Heart left ventricle (tissue), 16 donors: ENCODE measurements at regions of chr12 and their contacts with region 1.

Region 1: GRCh38 chr12:46661110-46661845 is 164.5 kb downstream of the SLC38A4 start:
- DNase-seq: peak in 2 of 5 donors; percentile 24 to 29
- ATAC-seq: peak; percentile 57 to 83 (median 82)
- H3K4me3 ChIP-seq: no peak overlapping the region
- H3K27ac ChIP-seq: peak overlapping the region in 7 of 12 donors; percentile 49 to 77 (median 68)
- H3K4me1 ChIP-seq: peaks cover 2 to 59% (median 40%) of the 10 kb centered on the region in 12 donors
- H3K27me3 ChIP-seq: no peaks in the 10 kb centered on the region
- CTCF ChIP-seq: peak; percentile 70 to 91 (median 83)
- POLR2A ChIP-seq: no peak

Region 2: GRCh38 chr12:45990468-45991283 is 670.6 kb before region 1 on chr12 and contains the start of gene SCAF11:
- intact Hi-C with region 1: loop called in 1 of 10 experiments (anchors 5 kb)
- DNase-seq: peak; percentile 100
- ATAC-seq: peak; percentile 90 to 96 (median 94)
- H3K4me3 ChIP-seq: peak within 1 kb of the TSS; percentile 73 to 98 (median 90)
- H3K27ac ChIP-seq: peak within 1 kb of the TSS; percentile 96 to 100 (median 99)
- H3K4me1 ChIP-seq: peaks cover 0 to 48% (median 35%) of the 10 kb centered on the region in 12 donors
- H3K27me3 ChIP-seq: no peaks in the 10 kb centered on the region
- CTCF ChIP-seq: peak; percentile 91 to 99 (median 94)
- POLR2A ChIP-seq: peak; percentile 66 to 75
- total RNA-seq, gene SCAF11: 71.3 to 148 (median 98.7) TPM

Region 3: GRCh38 chr12:46153268-46153872 is 507.9 kb before region 1 on chr12:
- intact Hi-C with region 1: loop called in 3 of 10 experiments (anchors 10 kb)
- DNase-seq: no peak
- ATAC-seq: no peak
- H3K4me3 ChIP-seq: no peak overlapping the region
- H3K27ac ChIP-seq: no peak overlapping the region
- H3K4me1 ChIP-seq: peaks cover 0 to 11% (median 0%) of the 10 kb centered on the region in 12 donors
- H3K27me3 ChIP-seq: no peaks in the 10 kb centered on the region
- CTCF ChIP-seq: peak; percentile 33 to 72 (median 57)
- POLR2A ChIP-seq: no peak

Region 4: GRCh38 chr12:46357438-46358324 is 303.6 kb before region 1 on chr12:
- intact Hi-C with region 1: loop called in 1 of 10 experiments (anchors 10 kb)
- DNase-seq: no peak
- ATAC-seq: peak in 3 of 4 donors; percentile 19 to 39 (median 31)
- H3K4me3 ChIP-seq: no peak overlapping the region
- H3K27ac ChIP-seq: peak overlapping the region in 1 of 12 donors; percentile 1
- H3K4me1 ChIP-seq: peaks cover 0 to 29% (median 6%) of the 10 kb centered on the region in 12 donors
- H3K27me3 ChIP-seq: no peaks in the 10 kb centered on the region
- CTCF ChIP-seq: no peak
- POLR2A ChIP-seq: no peak

Region 5: GRCh38 chr12:46382964-46383653 is 278.2 kb before region 1 on chr12:
- intact Hi-C with region 1: loop called in 3 of 10 experiments (anchors 5 to 10 kb)
- DNase-seq: peak; percentile 98 to 99 (median 98)
- ATAC-seq: peak; percentile 92 to 95 (median 93)
- H3K4me3 ChIP-seq: peak overlapping the region; percentile 41 to 82 (median 74)
- H3K27ac ChIP-seq: peak overlapping the region; percentile 97 to 100 (median 100)
- H3K4me1 ChIP-seq: peaks cover 0 to 52% (median 42%) of the 10 kb centered on the region in 12 donors
- H3K27me3 ChIP-seq: no peaks in the 10 kb centered on the region
- CTCF ChIP-seq: peak in 8 of 12 donors; percentile 14 to 48 (median 28)
- POLR2A ChIP-seq: peak; percentile 19 to 93

Region 6: DNA sequence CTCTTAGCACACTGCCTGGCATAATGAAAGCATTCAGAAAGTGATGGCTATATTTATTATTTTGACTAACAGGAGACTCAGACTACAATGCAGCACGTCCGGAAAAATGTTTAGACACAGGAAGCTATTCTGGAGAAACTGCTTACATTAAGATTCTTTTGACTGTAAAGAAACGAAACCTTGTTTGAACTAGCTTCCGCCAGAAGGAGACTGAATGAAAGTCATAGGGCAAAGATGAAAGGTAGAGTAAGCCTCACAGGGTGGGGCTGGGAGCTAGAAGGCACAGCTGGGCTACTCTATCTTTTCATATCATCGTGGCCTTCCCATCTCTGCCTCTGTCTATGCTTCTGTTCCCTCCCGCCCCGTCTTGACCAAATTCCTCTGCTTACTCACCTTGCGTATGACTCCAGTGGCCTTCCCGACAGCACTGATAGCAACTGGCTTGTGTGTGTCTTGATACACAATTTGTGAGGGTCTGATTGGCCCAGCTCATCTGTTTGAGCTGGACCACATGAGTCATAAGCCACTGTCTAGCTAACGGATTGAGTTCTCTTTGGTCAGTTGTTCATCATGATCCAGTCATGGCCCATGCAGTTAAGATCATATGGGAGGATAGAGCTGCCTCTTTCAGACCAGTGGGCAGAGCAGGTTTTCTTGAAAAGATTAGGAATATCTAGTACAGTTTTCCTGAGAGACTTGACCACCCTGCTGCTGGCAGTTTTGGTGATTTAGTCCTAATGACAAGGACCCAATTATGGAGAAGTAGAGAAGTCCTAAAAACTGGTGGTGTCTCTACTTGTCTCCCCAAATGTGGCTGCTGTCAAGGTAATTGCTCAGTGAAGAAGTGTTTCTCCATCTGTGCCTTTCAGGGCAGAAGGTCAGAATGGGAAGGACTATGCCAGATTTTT is 137.2 kb before region 1 on chr12:
- intact Hi-C with region 1: loop called in 3 of 10 experiments (anchors 5 to 10 kb)
- DNase-seq: peak in 1 of 5 donors; percentile 39
- ATAC-seq: peak in 1 of 4 donors; percentile 48
- H3K4me3 ChIP-seq: no peak overlapping the region
- H3K27ac ChIP-seq: peak overlapping the region; percentile 24 to 87 (median 77)
- H3K4me1 ChIP-seq: peaks cover 0 to 50% (median 31%) of the 10 kb centered on the region in 12 donors
- H3K27me3 ChIP-seq: no peaks in the 10 kb centered on the region
- CTCF ChIP-seq: no peak
- POLR2A ChIP-seq: no peak